ENCODE measurements at regions of chr17 and their contacts with region 1.

Region 1: DNA sequence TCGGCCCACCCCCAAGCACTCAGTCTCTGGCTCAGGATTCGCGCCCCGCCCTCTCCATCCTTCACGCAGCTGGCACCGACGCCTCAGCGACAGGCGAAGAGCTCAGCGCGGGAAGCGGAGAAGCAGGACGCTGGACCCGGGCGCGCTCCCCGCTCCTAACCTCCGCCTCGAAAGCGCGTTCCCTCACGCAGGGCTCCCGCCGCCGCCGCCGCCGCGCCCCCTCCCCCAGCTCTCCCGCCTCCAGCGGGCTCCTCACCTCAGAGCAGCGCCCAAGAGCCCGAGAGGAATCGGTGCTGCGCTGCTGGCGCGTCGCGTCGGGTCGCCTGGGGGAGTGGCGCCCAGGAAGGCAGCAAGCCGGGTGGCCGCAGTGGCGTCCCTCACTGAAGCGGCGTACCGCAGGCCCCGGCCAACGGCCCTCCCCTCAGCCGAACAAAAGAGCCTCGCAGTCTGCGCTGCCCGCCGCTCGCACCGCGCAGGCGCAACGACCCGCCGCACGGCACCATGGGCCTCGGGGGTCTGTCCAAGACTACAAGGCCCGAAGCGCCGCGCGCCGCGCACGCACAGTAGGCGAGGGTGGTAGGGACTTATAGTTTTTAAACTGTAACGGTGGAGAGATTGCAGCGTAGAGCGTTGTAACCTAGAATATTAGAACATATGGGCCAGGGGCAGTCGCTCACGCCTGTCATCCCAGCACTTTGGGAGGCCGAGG is at the start of gene CBX1:
- DNase-seq: peak; percentile 92
- H3K4me3 ChIP-seq: peak within 1 kb of the TSS; percentile 87 to 94 (median 93)
- H3K27ac ChIP-seq: peak within 1 kb of the TSS; percentile 78
- H3K4me1 ChIP-seq: peaks cover 6% of the 10 kb centered on the region
- H3K27me3 ChIP-seq: no peaks in the 10 kb centered on the region
- CTCF ChIP-seq: no peak
- total RNA-seq, gene CBX1: 35.0 to 69.2 TPM

Region 2: GRCh38 chr17:48047741-48048383 is 53.3 kb before region 1 on chr17 and contains the start of gene NFE2L1:
- CTCF ChIA-PET with region 1: no interaction called
- dilution Hi-C with region 1: no loop called
- in situ Hi-C with region 1: no loop called
- intact Hi-C with region 1: loop called (anchors 2 kb)
- DNase-seq: peak; percentile 100
- H3K4me3 ChIP-seq: peak within 1 kb of the TSS; percentile 55 to 87 (median 74)
- H3K27ac ChIP-seq: peak within 1 kb of the TSS; percentile 88
- H3K4me1 ChIP-seq: peaks cover 61% of the 10 kb centered on the region
- H3K27me3 ChIP-seq: no peaks in the 10 kb centered on the region
- CTCF ChIP-seq: no peak
- total RNA-seq, gene NFE2L1: 283 to 291 TPM

Region 3: DNA sequence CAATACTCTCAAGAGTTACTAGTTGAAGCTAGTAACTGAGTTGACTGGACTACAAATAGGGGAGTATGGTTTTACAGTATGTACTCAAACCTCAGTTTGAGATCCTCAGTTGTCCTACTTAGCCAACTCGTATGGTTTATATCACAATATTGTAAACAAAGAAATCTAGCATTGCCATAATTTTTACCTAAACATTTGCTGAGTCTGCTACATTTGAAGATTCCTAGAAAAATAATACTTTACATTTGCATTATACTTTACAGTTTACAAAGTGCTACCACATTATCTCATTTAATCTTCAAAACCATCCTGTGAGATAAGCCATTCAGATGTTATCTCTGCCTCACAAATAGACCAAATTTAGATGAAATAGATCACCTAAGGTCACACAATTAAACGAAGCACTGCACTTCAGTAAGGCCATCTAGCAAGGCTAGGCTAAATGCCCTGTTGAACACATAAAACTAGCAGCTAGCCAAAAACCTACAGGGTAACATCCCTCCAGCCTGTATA is 16.2 kb before region 1 on chr17:
- CTCF ChIA-PET with region 1: no interaction called
- dilution Hi-C with region 1: no loop called
- in situ Hi-C with region 1: no loop called
- intact Hi-C with region 1: loop called (anchors 2 kb)
- DNase-seq: no peak
- H3K4me3 ChIP-seq: no peak overlapping the region
- H3K27ac ChIP-seq: no peak overlapping the region
- H3K4me1 ChIP-seq: no peaks in the 10 kb centered on the region
- H3K27me3 ChIP-seq: no peaks in the 10 kb centered on the region
- CTCF ChIP-seq: no peak

Region 4: DNA sequence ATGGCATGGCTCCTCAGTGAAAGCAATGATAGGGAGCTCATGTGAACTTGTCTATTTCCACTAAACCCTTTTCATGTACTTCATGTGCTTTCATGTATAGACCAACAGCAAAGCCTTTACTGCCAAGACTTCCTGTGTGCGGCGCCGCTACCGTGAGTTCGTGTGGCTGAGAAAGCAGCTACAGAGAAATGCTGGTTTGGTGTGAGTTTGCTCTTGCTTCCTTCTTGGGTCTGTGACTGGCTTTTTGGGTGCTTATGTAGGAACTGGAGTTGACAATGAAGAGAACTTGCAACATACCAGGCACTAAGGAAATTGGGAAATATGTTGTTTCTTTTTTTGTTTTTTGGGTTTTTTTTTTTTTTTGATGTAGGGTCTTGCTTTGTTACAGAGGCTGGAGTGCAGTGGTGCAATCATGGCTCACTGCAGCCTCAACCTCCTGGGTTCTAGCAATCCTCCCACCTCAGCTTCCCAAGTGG is 12.1 kb after region 1 on chr17:
- CTCF ChIA-PET with region 1: interaction called, 29 read pairs
- dilution Hi-C with region 1: no loop called
- in situ Hi-C with region 1: no loop called
- intact Hi-C with region 1: no loop called
- DNase-seq: no peak
- H3K4me3 ChIP-seq: no peak overlapping the region
- H3K27ac ChIP-seq: no peak overlapping the region
- H3K4me1 ChIP-seq: peaks cover 7% of the 10 kb centered on the region
- H3K27me3 ChIP-seq: no peaks in the 10 kb centered on the region
- CTCF ChIP-seq: no peak